H1 (cell line): ENCODE measurements at regions of chr9 and their contacts with region 1.

Region 1: DNA sequence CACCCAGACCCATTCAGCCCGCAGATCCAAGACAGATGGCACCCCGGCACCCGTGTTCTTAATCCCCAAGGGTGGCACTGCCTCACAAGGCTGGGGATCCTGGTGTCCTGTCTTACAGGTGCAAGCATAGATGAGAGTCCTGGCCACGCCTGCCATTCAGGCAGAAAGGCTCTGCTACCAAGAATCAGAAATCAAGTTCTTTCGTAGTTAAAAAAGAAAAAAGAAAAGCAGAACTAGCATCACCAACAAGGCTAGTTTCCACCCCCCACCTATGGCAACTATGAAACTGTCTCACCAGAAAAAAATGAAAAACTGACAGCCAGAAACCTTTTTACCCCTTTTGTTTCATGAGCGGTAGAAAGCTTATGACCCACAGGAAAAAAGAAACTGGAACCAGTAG is 170.4 kb downstream of the SYK start:
- DNase-seq: no peak
- H3K4me3 ChIP-seq: no peak overlapping the region
- H3K27ac ChIP-seq: no peak overlapping the region
- H3K4me1 ChIP-seq: peaks cover 0 to 7% (median 4%) of the 10 kb centered on the region in 4 experiments; a peak in 3 of 7 replicates
- H3K27me3 ChIP-seq: no peaks in the 10 kb centered on the region
- CTCF ChIP-seq: no peak
- EP300 ChIP-seq: no peak
- POLR2A ChIP-seq: no peak
- RAD21 ChIP-seq: no peak

Region 2: GRCh38 chr9:90985631-90986030 is 13.6 kb after region 1 on chr9:
- CTCF ChIA-PET with region 1: interaction called, 13 read pairs
- POLR2A ChIA-PET with region 1: no interaction called
- DNase-seq: no peak
- H3K4me3 ChIP-seq: no peak overlapping the region
- H3K27ac ChIP-seq: no peak overlapping the region
- H3K4me1 ChIP-seq: no peaks in the 10 kb centered on the region
- H3K27me3 ChIP-seq: no peaks in the 10 kb centered on the region
- CTCF ChIP-seq: no peak
- EP300 ChIP-seq: no peak
- POLR2A ChIP-seq: no peak
- RAD21 ChIP-seq: no peak